Naive thymus-derived CD4-positive, alpha-beta T cell (primary cell): ENCODE measurements at regions of chr11 and their contacts with region 1.

Region 1: GRCh38 chr11:47071791-47072261 is 104.9 kb downstream of the ARFGAP2 start:
- DNase-seq: no peak
- ATAC-seq: no peak
- H3K4me3 ChIP-seq: no peak overlapping the region
- H3K4me3 Mint-ChIP-seq: no peak overlapping the region
- H3K27ac ChIP-seq: no peak overlapping the region
- H3K27ac Mint-ChIP-seq: no peak overlapping the region
- H3K4me1 ChIP-seq: no peaks in the 10 kb centered on the region
- H3K4me1 Mint-ChIP-seq: no peaks in the 10 kb centered on the region
- H3K27me3 ChIP-seq: no peaks in the 10 kb centered on the region
- H3K27me3 Mint-ChIP-seq: peaks cover 0 to 3% (median 0%) of the 10 kb centered on the region in 5 donors

Region 2: GRCh38 chr11:46835897-46836296 is 235.9 kb before region 1 on chr11:
- CTCF ChIA-PET with region 1: no interaction called
- POLR2A ChIA-PET with region 1: no interaction called
- intact Hi-C with region 1: loop called in 1 of 2 experiments (anchors 2 kb)
- DNase-seq: no peak
- ATAC-seq: no peak
- H3K4me3 ChIP-seq: no peak overlapping the region
- H3K4me3 Mint-ChIP-seq: no peak overlapping the region
- H3K27ac ChIP-seq: no peak overlapping the region
- H3K27ac Mint-ChIP-seq: no peak overlapping the region
- H3K4me1 ChIP-seq: no peaks in the 10 kb centered on the region
- H3K4me1 Mint-ChIP-seq: peaks cover 20 to 52% (median 38%) of the 10 kb centered on the region in 7 donors
- H3K27me3 ChIP-seq: no peaks in the 10 kb centered on the region
- H3K27me3 Mint-ChIP-seq: no peaks in the 10 kb centered on the region

Region 3: GRCh38 chr11:47083913-47084312 is 12.1 kb after region 1 on chr11:
- CTCF ChIA-PET with region 1: no interaction called
- POLR2A ChIA-PET with region 1: no interaction called
- intact Hi-C with region 1: no loop called
- DNase-seq: no peak
- ATAC-seq: no peak
- H3K4me3 ChIP-seq: no peak overlapping the region
- H3K4me3 Mint-ChIP-seq: no peak overlapping the region
- H3K27ac ChIP-seq: no peak overlapping the region
- H3K27ac Mint-ChIP-seq: no peak overlapping the region
- H3K4me1 ChIP-seq: no peaks in the 10 kb centered on the region
- H3K4me1 Mint-ChIP-seq: peaks cover 0 to 4% (median 0%) of the 10 kb centered on the region in 7 donors
- H3K27me3 ChIP-seq: no peaks in the 10 kb centered on the region
- H3K27me3 Mint-ChIP-seq: no peaks in the 10 kb centered on the region

Region 4: DNA sequence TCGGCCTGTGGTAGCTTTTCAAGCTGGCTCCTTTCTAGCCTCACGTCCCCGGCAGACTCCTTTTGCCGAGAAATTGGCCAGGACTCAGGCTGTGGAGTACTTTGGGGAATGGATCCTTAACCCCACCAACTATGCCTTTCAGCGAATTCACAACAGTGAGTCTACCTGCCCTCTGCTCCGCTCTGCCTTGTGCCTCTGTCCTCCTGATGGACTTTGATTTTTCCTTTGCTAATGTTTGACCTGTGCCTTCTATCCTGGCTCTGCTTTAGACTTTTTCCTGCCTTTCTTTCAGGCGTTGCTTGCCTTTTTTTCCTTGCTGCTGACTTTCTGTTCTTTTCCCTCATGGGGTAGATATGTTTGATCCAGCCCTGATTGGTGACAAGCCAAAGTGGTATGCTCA is 210.6 kb after region 1 on chr11:
- CTCF ChIA-PET with region 1: no interaction called
- POLR2A ChIA-PET with region 1: no interaction called
- intact Hi-C with region 1: loop called in 1 of 2 experiments (anchors 5 kb)
- DNase-seq: no peak
- ATAC-seq: no peak
- H3K4me3 ChIP-seq: no peak overlapping the region
- H3K4me3 Mint-ChIP-seq: no peak overlapping the region
- H3K27ac ChIP-seq: no peak overlapping the region
- H3K27ac Mint-ChIP-seq: peak overlapping the region in 3 of 9 donors; percentile 0 to 67 (median 37)
- H3K4me1 ChIP-seq: no peaks in the 10 kb centered on the region
- H3K4me1 Mint-ChIP-seq: peaks cover 0 to 5% (median 2%) of the 10 kb centered on the region in 7 donors
- H3K27me3 ChIP-seq: no peaks in the 10 kb centered on the region
- H3K27me3 Mint-ChIP-seq: no peaks in the 10 kb centered on the region